ENCODE measurements at regions of chr16 and their contacts with region 1.

Region 1: GRCh38 chr16:3094289-3095027 is 4.6 kb downstream of the ZSCAN10 start:
- DNase-seq: peak; percentile 68
- H3K4me3 Mint-ChIP-seq: peak overlapping the region; percentile 1
- H3K27ac Mint-ChIP-seq: peak overlapping the region; percentile 37
- H3K4me1 Mint-ChIP-seq: peaks cover 46% of the 10 kb centered on the region
- H3K27me3 Mint-ChIP-seq: no peaks in the 10 kb centered on the region

Region 2: GRCh38 chr16:3106205-3106928 is 11.9 kb after region 1 on chr16:
- CTCF ChIA-PET with region 1: interaction called, 19 read pairs
- POLR2A ChIA-PET with region 1: interaction called, 6 read pairs
- DNase-seq: peak; percentile 92
- H3K4me3 Mint-ChIP-seq: peak overlapping the region; percentile 76
- H3K27ac Mint-ChIP-seq: peak overlapping the region; percentile 81
- H3K4me1 Mint-ChIP-seq: peaks cover 42% of the 10 kb centered on the region
- H3K27me3 Mint-ChIP-seq: peaks cover 5% of the 10 kb centered on the region

Measured in activated CD4-positive, alpha-beta memory T cell treated with anti-CD3 and anti-CD28 coated beads, Interleukin-2, amount 10 ng/mL, durations not matched to agents 7 days and 5 days (primary cell).